Breast epithelium (tissue), 4 donors: ENCODE measurements at regions of chr1 and their contacts with region 1.

Region 1: DNA sequence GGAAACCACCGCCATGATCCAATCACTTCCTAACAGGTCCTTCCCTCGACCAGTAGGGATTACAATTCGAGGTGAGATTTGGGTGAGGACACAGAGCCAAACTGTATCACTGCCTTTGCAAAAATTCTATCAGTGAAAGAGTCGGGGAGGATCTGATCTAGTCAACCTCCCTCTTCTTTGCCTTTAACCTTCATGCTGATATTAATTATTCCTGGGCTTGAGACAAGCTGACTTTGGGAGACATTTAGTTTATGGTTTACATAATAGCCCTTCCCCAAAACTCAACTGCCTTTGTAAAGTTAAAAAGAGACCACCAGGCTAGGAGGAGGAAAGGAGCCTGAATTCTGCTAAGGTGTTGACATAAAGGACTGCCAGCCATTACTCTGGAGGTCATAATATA is 92.8 kb downstream of the TRIM33 start:
- DNase-seq: no peak
- H3K4me3 ChIP-seq: no peak overlapping the region
- H3K27ac ChIP-seq: no peak overlapping the region
- H3K4me1 ChIP-seq: no peaks in the 10 kb centered on the region
- H3K27me3 ChIP-seq: no peaks in the 10 kb centered on the region
- CTCF ChIP-seq: no peak
- POLR2A ChIP-seq: no peak

Region 2: DNA sequence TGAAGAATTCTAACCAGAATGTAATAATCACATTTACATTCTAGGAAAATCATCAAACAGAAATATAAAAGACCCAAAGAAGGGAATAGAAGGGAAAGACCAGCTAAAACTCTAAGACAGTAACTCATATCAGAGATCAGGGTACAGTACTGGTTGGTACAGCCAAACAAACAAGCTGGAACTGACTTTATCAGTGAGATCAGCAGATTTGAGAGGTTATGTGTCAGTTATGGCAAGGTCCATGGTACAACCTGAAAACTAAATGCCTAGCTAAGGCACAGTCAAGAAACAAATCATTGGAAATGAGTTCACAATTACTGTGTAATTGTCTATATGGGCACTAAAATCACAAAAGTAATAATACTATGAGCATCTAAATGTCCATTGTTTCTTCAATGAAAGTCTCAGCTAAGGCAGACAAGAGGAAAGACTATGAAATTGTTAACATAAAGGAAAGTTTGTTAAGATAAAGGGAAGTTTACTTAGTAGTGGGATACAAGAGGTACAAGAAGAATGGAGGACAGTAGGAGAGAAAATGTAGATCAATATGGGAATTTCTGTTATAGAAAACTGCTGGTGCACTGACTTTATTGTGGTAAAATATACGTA is 17.0 kb after region 1 on chr1:
- intact Hi-C with region 1: loop called (anchors 2 kb)
- DNase-seq: no peak
- H3K4me3 ChIP-seq: no peak overlapping the region
- H3K27ac ChIP-seq: no peak overlapping the region
- H3K4me1 ChIP-seq: no peaks in the 10 kb centered on the region
- H3K27me3 ChIP-seq: no peaks in the 10 kb centered on the region
- CTCF ChIP-seq: no peak
- POLR2A ChIP-seq: no peak